PC-9 (cell line): ENCODE measurements at regions of chr10 and their contacts with region 1.

Region 1: GRCh38 chr10:114304017-114304570 is 65.0 kb downstream of the VWA2 start:
- DNase-seq: peak in 1 of 2 experiments; percentile 51
- H3K4me3 ChIP-seq: no peak overlapping the region
- H3K27ac ChIP-seq: no peak overlapping the region
- H3K4me1 ChIP-seq: peaks cover 9% of the 10 kb centered on the region
- H3K27me3 ChIP-seq: no peaks in the 10 kb centered on the region
- CTCF ChIP-seq: peak; percentile 77

Region 2: DNA sequence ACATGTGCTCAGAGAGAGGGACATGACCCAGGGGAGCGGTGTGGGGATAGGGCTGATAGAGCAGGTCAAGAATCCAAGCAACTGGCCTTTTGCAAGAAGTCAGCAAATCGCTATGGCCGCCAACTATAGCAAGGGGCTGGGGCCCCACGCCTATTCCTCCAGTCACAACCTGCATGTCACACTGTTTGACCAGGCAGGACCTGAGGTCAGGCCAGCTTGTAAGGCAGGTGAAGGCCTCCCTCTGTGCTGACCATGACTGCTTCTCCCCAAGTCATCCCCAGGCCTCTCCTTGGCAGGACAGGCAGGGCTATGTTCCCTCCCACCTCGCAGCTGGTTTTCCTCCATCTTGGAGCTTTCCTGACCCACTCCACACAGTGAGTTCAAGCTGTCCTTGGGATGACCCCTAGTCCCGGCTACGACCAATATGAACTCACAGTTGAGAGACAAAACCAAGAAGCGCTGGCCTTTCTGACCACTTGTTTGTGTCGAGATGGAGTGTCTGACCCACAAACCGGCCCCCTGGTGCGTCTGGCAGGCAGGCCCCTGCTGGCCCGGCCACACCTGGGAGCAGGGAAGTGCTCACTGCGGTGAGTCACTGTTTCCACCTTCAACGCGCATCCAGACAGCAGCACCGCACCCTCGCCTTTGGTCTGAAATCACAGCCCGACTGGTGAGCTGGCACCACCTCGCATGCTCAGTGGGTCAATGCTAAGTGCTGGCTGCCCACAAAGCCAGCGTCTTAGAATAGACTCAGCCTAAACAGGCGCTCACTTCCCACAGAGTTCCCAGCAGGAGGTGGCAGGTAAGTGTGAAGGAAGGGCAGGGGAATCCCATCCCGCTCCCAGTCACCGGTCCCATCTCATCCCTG is 16.4 kb after region 1 on chr10:
- CTCF ChIA-PET with region 1: no interaction called
- POLR2A ChIA-PET with region 1: interaction called, 3 read pairs
- intact Hi-C with region 1: loop called (anchors 2 kb)
- DNase-seq: peak; percentile 94 to 97
- H3K4me3 ChIP-seq: no peak overlapping the region; the same call in 1 of the 2 replicates
- H3K27ac ChIP-seq: peak overlapping the region; percentile 89
- H3K4me1 ChIP-seq: peaks cover 42% of the 10 kb centered on the region
- H3K27me3 ChIP-seq: no peaks in the 10 kb centered on the region
- CTCF ChIP-seq: no peak

Region 3: DNA sequence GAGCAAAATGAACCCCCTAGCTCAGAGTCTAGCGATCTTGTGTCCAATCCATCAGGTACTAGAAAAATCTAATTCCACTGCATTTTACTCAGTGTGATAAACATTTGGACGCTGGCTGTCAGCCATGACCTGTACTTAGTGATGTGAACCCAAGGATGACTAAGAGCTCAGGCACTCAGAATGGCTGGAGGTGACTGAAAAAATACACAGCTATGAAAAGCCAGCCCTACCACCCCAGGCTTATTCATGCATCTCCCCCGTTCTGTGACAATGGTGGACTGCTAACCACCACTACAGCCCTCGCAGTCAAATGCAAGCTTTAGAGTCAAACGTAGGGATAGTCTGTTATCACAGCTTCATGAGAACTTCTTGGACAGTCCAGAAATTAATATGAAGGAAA is 85.3 kb after region 1 on chr10:
- CTCF ChIA-PET with region 1: no interaction called
- POLR2A ChIA-PET with region 1: no interaction called
- intact Hi-C with region 1: loop called (anchors 1 kb)
- DNase-seq: peak; percentile 67 to 85
- H3K4me3 ChIP-seq: no peak overlapping the region
- H3K27ac ChIP-seq: no peak overlapping the region
- H3K4me1 ChIP-seq: peaks cover 32% of the 10 kb centered on the region
- H3K27me3 ChIP-seq: no peaks in the 10 kb centered on the region
- CTCF ChIP-seq: no peak

Region 4: DNA sequence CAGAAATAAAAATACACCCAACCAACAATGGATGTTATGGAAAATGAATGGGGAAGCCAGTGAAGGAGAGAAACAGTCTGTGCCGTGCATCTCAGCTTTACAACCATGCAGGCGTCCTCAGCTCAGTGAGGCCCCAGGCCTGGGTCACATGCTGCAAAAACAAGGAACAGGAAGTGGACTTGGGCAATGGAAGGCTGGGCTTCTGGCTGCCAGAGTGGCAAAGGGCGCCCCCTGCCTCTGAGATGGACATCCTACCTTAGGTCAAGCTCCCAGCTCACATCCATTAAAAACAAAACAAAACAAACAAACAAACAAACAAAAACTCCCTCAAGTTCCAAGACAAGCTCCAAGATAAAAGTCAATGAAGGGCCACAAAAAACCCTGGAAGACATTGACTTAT is 154.9 kb after region 1 on chr10:
- CTCF ChIA-PET with region 1: interaction called, 18 read pairs
- POLR2A ChIA-PET with region 1: interaction called, 3 read pairs
- intact Hi-C with region 1: loop called (anchors 1 kb)
- DNase-seq: no peak
- H3K4me3 ChIP-seq: no peak overlapping the region
- H3K27ac ChIP-seq: no peak overlapping the region
- H3K4me1 ChIP-seq: no peaks in the 10 kb centered on the region
- H3K27me3 ChIP-seq: no peaks in the 10 kb centered on the region
- CTCF ChIP-seq: peak; percentile 55

Region 5: GRCh38 chr10:114550756-114551635 is 246.9 kb after region 1 on chr10:
- CTCF ChIA-PET with region 1: interaction called, 3 read pairs
- POLR2A ChIA-PET with region 1: no interaction called
- intact Hi-C with region 1: loop called (anchors 1 kb)
- DNase-seq: peak in 1 of 2 experiments; percentile 40
- H3K4me3 ChIP-seq: no peak overlapping the region
- H3K27ac ChIP-seq: no peak overlapping the region
- H3K4me1 ChIP-seq: no peaks in the 10 kb centered on the region
- H3K27me3 ChIP-seq: no peaks in the 10 kb centered on the region
- CTCF ChIP-seq: peak; percentile 74